Tibial artery (tissue), 4 donors: ENCODE measurements at regions of chr4 and their contacts with region 1.

Region 1: DNA sequence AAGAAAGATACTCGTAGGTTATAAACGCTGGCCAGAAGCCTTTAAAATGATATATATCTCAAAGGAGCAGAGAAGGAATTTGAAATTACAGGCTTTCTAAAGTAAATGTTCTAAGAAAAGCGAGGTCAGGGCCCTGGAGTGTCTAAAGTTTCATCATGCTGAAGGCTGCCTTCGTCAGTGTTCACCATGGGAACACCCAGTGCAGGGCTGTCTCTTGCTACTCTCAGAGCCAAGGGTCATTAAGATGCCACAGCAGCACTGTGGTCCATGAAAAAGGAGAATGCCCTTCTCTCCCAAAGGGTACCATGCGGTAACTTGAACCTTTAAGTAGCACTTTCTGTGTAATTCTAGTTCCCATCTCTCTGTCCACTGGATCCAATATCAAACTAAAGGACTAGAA is 174.5 kb upstream of the NWD2 start:
- DNase-seq: no peak
- H3K4me3 ChIP-seq: no peak overlapping the region
- H3K27ac ChIP-seq: no peak overlapping the region
- H3K4me1 ChIP-seq: no peaks in the 10 kb centered on the region
- H3K27me3 ChIP-seq: no peaks in the 10 kb centered on the region
- CTCF ChIP-seq: no peak

Region 2: GRCh38 chr4:37124800-37125199 is 54.8 kb after region 1 on chr4:
- intact Hi-C with region 1: loop called (anchors 2 kb)
- DNase-seq: no peak
- H3K4me3 ChIP-seq: no peak overlapping the region
- H3K27ac ChIP-seq: no peak overlapping the region
- H3K4me1 ChIP-seq: no peaks in the 10 kb centered on the region
- H3K27me3 ChIP-seq: no peaks in the 10 kb centered on the region
- CTCF ChIP-seq: no peak

Region 3: GRCh38 chr4:37188100-37188499 is 118.1 kb after region 1 on chr4:
- intact Hi-C with region 1: no loop called
- DNase-seq: no peak
- H3K4me3 ChIP-seq: no peak overlapping the region
- H3K27ac ChIP-seq: no peak overlapping the region
- H3K4me1 ChIP-seq: no peaks in the 10 kb centered on the region
- H3K27me3 ChIP-seq: no peaks in the 10 kb centered on the region
- CTCF ChIP-seq: no peak

Region 4: DNA sequence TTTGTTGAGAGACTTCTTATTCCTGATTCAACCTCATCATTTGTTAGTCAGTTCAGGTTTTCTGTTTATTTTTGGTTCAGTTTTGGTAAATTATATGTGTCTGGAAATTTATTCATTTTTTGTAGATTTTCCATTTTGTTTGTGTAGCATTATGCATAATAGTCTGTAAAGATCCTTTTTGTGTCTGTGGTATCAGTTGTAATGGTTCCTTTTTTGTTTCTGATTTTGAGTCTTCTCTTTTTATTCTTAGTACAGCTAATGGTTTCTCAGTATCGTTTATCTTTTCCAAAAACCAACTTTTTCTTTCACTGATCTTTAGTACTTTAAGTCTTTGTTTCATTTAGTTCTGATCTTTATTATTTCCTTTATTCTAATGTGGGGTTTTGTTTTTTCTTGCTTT is 235.9 kb after region 1 on chr4:
- intact Hi-C with region 1: no loop called
- DNase-seq: no peak
- H3K4me3 ChIP-seq: no peak overlapping the region
- H3K27ac ChIP-seq: no peak overlapping the region
- H3K4me1 ChIP-seq: no peaks in the 10 kb centered on the region
- H3K27me3 ChIP-seq: no peaks in the 10 kb centered on the region
- CTCF ChIP-seq: no peak